ENCODE measurements at regions of chr14 and their contacts with region 1.

Region 1: GRCh38 chr14:51954657-51955056 is 34.7 kb upstream of the RTRAF start:
- DNase-seq: peak in 1 of 14 experiments; percentile 15
- ATAC-seq: no peak
- H3K4me3 ChIP-seq: no peak overlapping the region
- H3K4me3 Mint-ChIP-seq: no peak overlapping the region
- H3K27ac ChIP-seq: no peak overlapping the region
- H3K27ac Mint-ChIP-seq: peak overlapping the region; percentile 73
- H3K4me1 ChIP-seq: no peaks in the 10 kb centered on the region
- H3K4me1 Mint-ChIP-seq: peaks cover 32% of the 10 kb centered on the region
- H3K27me3 ChIP-seq: no peaks in the 10 kb centered on the region
- H3K27me3 Mint-ChIP-seq: no peaks in the 10 kb centered on the region
- CTCF ChIP-seq: no peak

Region 2: DNA sequence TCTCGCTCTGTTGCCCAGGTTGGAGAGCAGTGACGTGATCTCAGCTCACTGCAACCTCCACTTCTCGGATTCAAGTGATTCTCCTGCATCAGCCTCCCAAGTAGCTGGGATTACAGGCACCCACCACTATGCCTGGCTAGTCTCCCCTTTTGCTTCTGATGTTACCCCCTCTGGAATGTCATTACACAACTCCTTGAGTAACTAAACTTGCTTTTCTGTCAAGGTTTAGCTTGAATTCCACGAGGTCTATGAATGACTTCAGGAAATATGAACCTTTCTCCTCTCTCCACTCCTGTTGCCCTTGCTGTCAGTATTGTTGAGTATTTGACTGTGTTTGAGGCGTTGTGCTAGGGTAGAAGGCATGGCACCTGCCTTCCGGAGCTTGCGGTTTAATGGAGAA is 17.9 kb after region 1 on chr14:
- CTCF ChIA-PET with region 1: no interaction called
- POLR2A ChIA-PET with region 1: no interaction called
- intact Hi-C with region 1: loop called in 1 of 2 experiments (anchors 2 kb)
- DNase-seq: no peak
- ATAC-seq: no peak
- H3K4me3 ChIP-seq: no peak overlapping the region
- H3K4me3 Mint-ChIP-seq: no peak overlapping the region
- H3K27ac ChIP-seq: no peak overlapping the region
- H3K27ac Mint-ChIP-seq: peak overlapping the region; percentile 40
- H3K4me1 ChIP-seq: no peaks in the 10 kb centered on the region
- H3K4me1 Mint-ChIP-seq: peaks cover 5% of the 10 kb centered on the region
- H3K27me3 ChIP-seq: no peaks in the 10 kb centered on the region
- H3K27me3 Mint-ChIP-seq: no peaks in the 10 kb centered on the region
- CTCF ChIP-seq: no peak